Aorta (tissue), 5 donors: ENCODE measurements at regions of chr6 and their contacts with region 1.

Region 1: DNA sequence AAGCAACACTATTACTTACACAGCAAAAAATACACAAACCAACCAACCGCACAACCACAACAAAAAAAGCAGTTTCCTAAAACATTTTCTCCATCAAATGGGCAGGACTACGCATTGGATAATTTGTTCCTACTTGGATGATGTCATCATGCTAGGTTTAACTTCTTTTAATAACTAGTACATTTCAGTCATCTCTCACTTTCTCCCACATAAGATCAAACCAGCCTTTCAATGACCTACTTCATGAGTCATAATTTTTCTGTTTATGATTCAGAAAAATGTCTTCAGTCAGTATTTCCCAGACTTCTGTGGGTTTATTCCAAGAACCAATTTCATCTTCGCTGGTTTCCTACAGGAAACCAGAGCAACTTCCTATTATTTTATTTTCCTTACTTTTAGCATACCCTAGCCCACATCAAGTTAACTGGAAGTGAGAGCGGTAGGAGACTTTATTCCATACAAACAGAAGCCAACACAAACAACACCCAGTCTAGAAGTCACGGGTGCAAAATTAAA is 134.2 kb downstream of the GMDS start:
- DNase-seq: no peak
- ATAC-seq: peak; percentile 78
- H3K4me3 ChIP-seq: peak overlapping the region in 1 of 2 donors; percentile 89
- H3K27ac ChIP-seq: peak overlapping the region in 1 of 2 donors; percentile 77
- H3K4me1 ChIP-seq: peaks cover 3 to 5% of the 10 kb centered on the region in 2 donors
- H3K27me3 ChIP-seq: no peaks in the 10 kb centered on the region

Region 2: GRCh38 chr6:1695546-1696462 is 415.4 kb before region 1 on chr6:
- intact Hi-C with region 1: loop called in 1 of 2 experiments (anchors 5 kb)
- DNase-seq: peak; percentile 75 to 84
- ATAC-seq: peak; percentile 87
- H3K4me3 ChIP-seq: no peak overlapping the region
- H3K27ac ChIP-seq: peak overlapping the region; percentile 85 to 88
- H3K4me1 ChIP-seq: peaks cover 0 to 8% of the 10 kb centered on the region in 2 donors
- H3K27me3 ChIP-seq: no peaks in the 10 kb centered on the region

Region 3: DNA sequence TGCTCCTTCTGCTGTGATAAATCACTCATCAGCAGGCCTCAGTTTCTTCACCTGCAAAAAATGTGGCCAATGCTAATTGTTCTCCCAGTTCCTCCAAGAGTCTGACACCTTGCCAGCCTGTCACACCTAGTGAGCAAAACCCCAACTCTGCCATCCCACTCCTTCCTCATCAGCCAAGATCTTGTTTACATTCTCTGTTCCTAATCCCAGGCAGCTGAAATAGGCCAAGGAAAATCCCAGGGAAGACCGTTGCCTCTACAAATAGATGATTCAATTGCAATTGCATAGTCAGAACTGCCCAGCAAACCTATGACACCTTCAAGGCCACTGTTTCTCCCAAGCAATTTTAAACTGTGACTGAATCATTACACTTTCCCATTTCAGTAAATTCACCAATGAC is 55.5 kb after region 1 on chr6:
- intact Hi-C with region 1: loop called in 1 of 2 experiments (anchors 10 kb)
- DNase-seq: no peak
- ATAC-seq: no peak
- H3K4me3 ChIP-seq: no peak overlapping the region
- H3K27ac ChIP-seq: peak overlapping the region in 1 of 2 donors; percentile 10
- H3K4me1 ChIP-seq: peaks cover 0 to 2% of the 10 kb centered on the region in 2 donors
- H3K27me3 ChIP-seq: no peaks in the 10 kb centered on the region

Region 4: DNA sequence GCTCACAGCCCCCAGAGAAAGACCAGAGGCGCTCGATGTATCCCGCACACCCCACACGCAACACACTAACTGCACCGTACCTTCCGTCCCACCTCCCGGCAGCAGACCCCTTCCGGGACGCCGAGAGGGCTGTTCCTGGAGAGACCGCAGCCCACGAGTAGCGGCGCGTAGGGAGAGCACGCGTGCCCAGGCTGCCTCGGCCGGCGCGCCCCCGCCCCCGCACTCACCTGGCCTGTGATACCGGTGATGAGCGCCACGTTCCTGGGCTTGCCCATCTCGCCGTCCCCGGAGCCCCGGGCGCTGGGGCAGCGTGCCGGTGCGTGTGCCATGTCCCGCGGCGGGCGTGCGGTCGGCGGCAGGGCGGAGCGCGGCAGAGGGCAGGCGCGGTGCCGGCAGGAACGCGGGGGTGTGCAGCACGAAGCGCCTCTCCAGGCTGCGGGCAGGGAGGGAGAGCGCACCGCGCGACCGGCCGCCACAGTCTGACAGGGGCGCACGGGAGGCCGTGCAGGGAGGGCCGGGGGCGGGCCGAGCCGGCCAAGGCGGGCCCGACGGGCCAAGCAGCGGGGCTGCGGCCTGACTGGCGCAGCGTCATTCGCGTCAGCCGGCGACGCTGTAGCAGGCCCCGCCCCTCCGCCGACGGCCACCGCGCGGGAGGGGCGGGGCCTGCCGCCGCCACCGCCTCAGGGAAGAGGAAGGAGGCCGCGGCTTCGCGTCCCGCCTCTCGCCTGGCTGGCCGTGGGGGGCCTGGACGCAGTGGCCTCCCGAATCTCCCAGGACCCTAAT is 134.1 kb after region 1 on chr6 and contains the start of gene GMDS:
- intact Hi-C with region 1: loop called in 1 of 2 experiments (anchors 5 kb)
- DNase-seq: peak; percentile 91 to 94
- ATAC-seq: peak; percentile 98
- H3K4me3 ChIP-seq: peak within 1 kb of the TSS; percentile 95 to 97
- H3K27ac ChIP-seq: peak within 1 kb of the TSS; percentile 68 to 91
- H3K4me1 ChIP-seq: no peaks in the 10 kb centered on the region
- H3K27me3 ChIP-seq: no peaks in the 10 kb centered on the region
- total RNA-seq, gene GMDS: 66.1 to 67.1 TPM

Region 5: GRCh38 chr6:2448820-2449571 is 337.8 kb after region 1 on chr6:
- intact Hi-C with region 1: loop called (anchors 5 to 10 kb)
- DNase-seq: no peak
- ATAC-seq: peak; percentile 86
- H3K4me3 ChIP-seq: peak overlapping the region in 1 of 2 donors; percentile 23
- H3K27ac ChIP-seq: peak overlapping the region in 1 of 2 donors; percentile 45
- H3K4me1 ChIP-seq: peaks cover 0 to 3% of the 10 kb centered on the region in 2 donors
- H3K27me3 ChIP-seq: no peaks in the 10 kb centered on the region